Upper lobe of right lung (tissue), 1 donor: ENCODE measurements at regions of chr13 and their contacts with region 1.

Region 1: GRCh38 chr13:50069261-50069660 is 54.0 kb downstream of the KCNRG start:
- DNase-seq: no peak
- ATAC-seq: no peak
- H3K4me3 ChIP-seq: no peak overlapping the region
- H3K27ac ChIP-seq: no peak overlapping the region
- H3K4me1 ChIP-seq: no peaks in the 10 kb centered on the region
- H3K27me3 ChIP-seq: no peaks in the 10 kb centered on the region
- CTCF ChIP-seq: no peak

Region 2: GRCh38 chr13:50015258-50015657 is 54.0 kb before region 1 on chr13 and contains the start of gene KCNRG:
- intact Hi-C with region 1: loop called (anchors 10 kb)
- DNase-seq: no peak
- ATAC-seq: no peak
- H3K4me3 ChIP-seq: no peak within 1 kb of the TSS
- H3K27ac ChIP-seq: no peak within 1 kb of the TSS
- H3K4me1 ChIP-seq: peaks cover 13% of the 10 kb centered on the region
- H3K27me3 ChIP-seq: no peaks in the 10 kb centered on the region
- CTCF ChIP-seq: no peak
- total RNA-seq, gene KCNRG: 1.5 TPM